A549 (cell line): ENCODE measurements at regions of chr6 and their contacts with region 1.

Region 1: GRCh38 chr6:35452186-35453090 is at the start of gene FANCE:
- DNase-seq: peak; percentile 70 to 89
- ATAC-seq: peak; percentile 75 to 89
- H3K4me3 ChIP-seq: peak within 1 kb of the TSS; percentile 91
- H3K27ac ChIP-seq: peak within 1 kb of the TSS; percentile 74 to 88
- H3K4me1 ChIP-seq: peaks cover 5% of the 10 kb centered on the region; the same call in 2 of the 3 replicates
- CTCF ChIP-seq: no peak
- EP300 ChIP-seq: no peak
- POLR2A ChIP-seq: peak; percentile 14; the same call in 1 of the 2 replicates
- RAD21 ChIP-seq: no peak
- polyA plus RNA-seq, gene FANCE: 3.5 and 3.7 TPM in 2 replicates

Region 2: GRCh38 chr6:35173427-35174087 is 278.9 kb before region 1 on chr6:
- CTCF ChIA-PET with region 1: no interaction called
- POLR2A ChIA-PET with region 1: no interaction called
- DNase-seq: no peak
- ATAC-seq: peak in 1 of 2 experiments; percentile 30; a peak in 2 of 6 replicates
- H3K4me3 ChIP-seq: no peak overlapping the region
- H3K27ac ChIP-seq: peak overlapping the region in 1 of 2 experiments; percentile 28; a peak in 1 of 6 replicates
- H3K4me1 ChIP-seq: peaks cover 3% of the 10 kb centered on the region; the same call in 1 of the 3 replicates
- CTCF ChIP-seq: no peak
- EP300 ChIP-seq: no peak
- POLR2A ChIP-seq: no peak
- RAD21 ChIP-seq: no peak

Region 3: DNA sequence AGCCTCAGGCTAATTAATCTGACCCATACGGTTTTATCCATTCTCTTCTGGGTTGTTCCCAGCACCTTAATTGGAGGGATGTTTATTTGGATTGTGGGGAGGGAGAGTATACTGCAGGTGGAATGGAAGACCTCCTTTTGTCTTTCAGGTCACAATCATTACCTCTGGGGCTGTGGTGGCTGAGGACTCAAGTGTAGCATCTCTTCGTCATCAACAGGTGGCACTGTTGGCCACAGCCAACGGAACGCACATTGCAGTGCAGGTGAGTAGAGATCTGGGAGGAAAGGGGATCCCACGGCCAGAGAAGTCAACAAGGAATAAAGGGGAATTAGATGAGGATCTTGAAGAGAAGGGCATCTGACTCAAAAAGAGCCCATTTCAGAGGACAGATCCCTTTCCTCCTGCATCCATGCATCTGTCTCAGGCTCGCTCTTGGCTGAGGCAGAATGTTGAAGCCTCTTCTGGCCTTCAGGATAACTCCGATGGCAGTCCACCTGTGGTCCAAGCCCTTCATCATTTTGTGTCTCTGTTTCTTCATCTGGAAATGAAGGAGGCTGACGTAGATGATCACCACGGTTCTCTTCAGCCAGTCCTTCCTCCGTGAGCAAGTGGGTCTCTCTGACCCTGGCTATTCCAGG is 158.0 kb before region 1 on chr6:
- CTCF ChIA-PET with region 1: interaction called, 17 read pairs
- POLR2A ChIA-PET with region 1: no interaction called
- DNase-seq: peak; percentile 45 to 65
- ATAC-seq: peak; percentile 81 to 88
- H3K4me3 ChIP-seq: no peak overlapping the region
- H3K27ac ChIP-seq: no peak overlapping the region
- H3K4me1 ChIP-seq: no peaks in the 10 kb centered on the region
- CTCF ChIP-seq: peak; percentile 59
- EP300 ChIP-seq: no peak
- POLR2A ChIP-seq: no peak
- RAD21 ChIP-seq: peak; percentile 64 to 71

Region 4: DNA sequence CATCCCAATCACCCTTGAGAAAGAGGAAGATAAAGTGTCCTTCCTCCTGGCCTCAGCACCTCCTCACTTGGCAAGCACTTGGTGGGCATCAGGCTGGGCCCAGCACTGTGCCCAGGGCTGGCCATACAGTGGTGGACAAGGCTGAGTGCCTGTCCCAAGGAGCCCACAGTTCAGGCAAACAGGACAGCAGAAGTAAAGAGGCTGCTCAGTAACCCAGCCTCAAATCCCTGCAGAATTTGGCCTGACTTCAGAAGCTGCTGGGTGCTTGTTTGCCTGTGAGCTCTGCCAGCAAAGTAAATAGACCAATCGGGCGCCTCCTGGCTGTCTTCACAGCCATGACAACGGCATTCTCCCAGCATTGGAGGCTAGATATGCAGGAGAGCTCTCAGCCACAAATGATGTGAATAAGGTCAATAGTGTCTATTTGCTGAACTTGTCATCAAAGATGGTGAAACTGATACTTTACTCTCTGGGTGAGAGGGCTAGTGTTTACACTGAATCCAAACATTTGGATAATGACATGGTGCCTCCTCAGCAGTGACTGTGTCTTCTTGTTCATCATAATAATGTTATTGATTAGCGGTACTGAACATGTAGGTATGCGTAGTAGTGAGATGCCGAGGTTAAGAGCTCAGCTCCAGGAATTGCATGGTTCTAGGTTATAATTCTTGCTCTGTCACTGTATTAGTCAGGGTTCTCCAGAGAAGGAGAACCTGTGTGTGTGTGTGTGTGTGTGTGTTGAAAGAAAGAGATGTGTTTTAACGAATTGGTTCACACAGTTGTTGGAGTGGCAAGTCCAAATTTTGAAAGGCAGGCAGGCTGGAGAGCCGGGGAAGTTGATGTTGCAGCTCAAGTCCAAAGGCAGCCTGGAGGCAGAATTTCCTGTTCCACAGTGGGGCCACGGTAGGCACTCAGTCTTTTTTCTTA is 37.1 kb before region 1 on chr6:
- CTCF ChIA-PET with region 1: interaction called, 12 read pairs
- POLR2A ChIA-PET with region 1: no interaction called
- DNase-seq: peak; percentile 66 to 83
- ATAC-seq: peak; percentile 92 to 97
- H3K4me3 ChIP-seq: no peak overlapping the region
- H3K27ac ChIP-seq: peak overlapping the region in 1 of 2 experiments; percentile 27; a peak in 2 of 6 replicates
- H3K4me1 ChIP-seq: peaks cover 14% of the 10 kb centered on the region
- CTCF ChIP-seq: peak; percentile 58
- EP300 ChIP-seq: no peak
- POLR2A ChIP-seq: no peak
- RAD21 ChIP-seq: peak; percentile 45 to 53; a peak in 3 of 5 replicates

Region 5: GRCh38 chr6:35468181-35468979 is 15.9 kb after region 1 on chr6 and contains the start of gene RPL10A:
- CTCF ChIA-PET with region 1: interaction called, 48 read pairs
- POLR2A ChIA-PET with region 1: no interaction called
- DNase-seq: peak; percentile 73 to 95
- ATAC-seq: peak; percentile 86 to 90
- H3K4me3 ChIP-seq: peak within 1 kb of the TSS; percentile 99
- H3K27ac ChIP-seq: peak within 1 kb of the TSS; percentile 97 to 98
- H3K4me1 ChIP-seq: peaks cover 33% of the 10 kb centered on the region
- CTCF ChIP-seq: peak; percentile 81
- EP300 ChIP-seq: no peak
- POLR2A ChIP-seq: peak; percentile 99
- RAD21 ChIP-seq: peak; percentile 56 to 72
- polyA plus RNA-seq, gene RPL10A: 1,645 and 1,707 TPM in 2 replicates

Region 6: DNA sequence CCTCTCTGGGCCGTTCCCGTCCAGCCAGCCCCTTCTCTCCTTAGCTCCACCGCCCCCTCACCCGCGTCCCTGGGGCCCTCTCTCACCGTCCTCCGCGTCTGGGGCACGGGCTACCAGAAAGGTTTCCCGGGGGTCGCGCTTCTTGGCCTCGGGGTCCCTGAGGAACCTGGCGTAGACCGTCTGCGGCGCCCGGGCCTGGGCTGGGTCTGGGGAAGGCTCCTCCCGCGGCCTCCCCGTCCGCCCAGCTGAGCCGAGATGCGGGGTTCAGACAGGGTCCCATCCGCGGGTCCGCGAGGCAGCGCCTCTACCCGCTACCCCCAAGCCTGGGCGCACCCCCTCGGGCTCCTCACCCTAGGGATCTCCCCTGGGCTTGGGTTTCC is 59.1 kb after region 1 on chr6:
- CTCF ChIA-PET with region 1: no interaction called
- POLR2A ChIA-PET with region 1: no interaction called
- DNase-seq: no peak
- ATAC-seq: no peak
- H3K4me3 ChIP-seq: no peak overlapping the region
- H3K27ac ChIP-seq: no peak overlapping the region
- H3K4me1 ChIP-seq: no peaks in the 10 kb centered on the region
- CTCF ChIP-seq: no peak
- EP300 ChIP-seq: no peak
- POLR2A ChIP-seq: no peak
- RAD21 ChIP-seq: no peak

Region 7: DNA sequence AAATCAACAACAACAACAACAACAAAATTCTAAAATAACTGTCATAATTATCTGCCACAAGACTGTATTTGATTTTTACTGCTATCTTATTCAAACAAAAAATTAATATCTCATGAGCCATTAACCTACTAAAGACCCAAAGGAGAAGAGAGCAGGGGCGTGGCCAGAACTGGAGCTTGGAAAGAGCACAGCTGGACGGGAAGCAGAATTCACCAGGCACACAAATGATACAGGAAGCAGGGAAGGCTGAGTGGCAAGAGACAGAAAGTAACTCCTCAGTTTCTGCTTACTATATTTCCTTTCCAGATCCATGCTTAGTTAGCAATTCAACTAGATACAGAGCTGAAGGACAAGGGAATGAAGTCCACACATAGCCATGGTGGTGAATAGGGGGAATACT is 181.9 kb after region 1 on chr6:
- CTCF ChIA-PET with region 1: no interaction called
- POLR2A ChIA-PET with region 1: no interaction called
- DNase-seq: no peak
- ATAC-seq: no peak
- H3K4me3 ChIP-seq: no peak overlapping the region
- H3K27ac ChIP-seq: no peak overlapping the region
- H3K4me1 ChIP-seq: no peaks in the 10 kb centered on the region
- CTCF ChIP-seq: no peak
- EP300 ChIP-seq: no peak
- POLR2A ChIP-seq: no peak
- RAD21 ChIP-seq: no peak